ENCODE measurements at regions of chr9 and their contacts with region 1.

Region 1: GRCh38 chr9:128067876-128068613 is at the start of gene SLC25A25:
- DNase-seq: peak; percentile 100
- ATAC-seq: peak; percentile 89
- H3K4me3 Mint-ChIP-seq: peak within 1 kb of the TSS; percentile 96
- H3K27ac Mint-ChIP-seq: peak within 1 kb of the TSS; percentile 87
- H3K4me1 Mint-ChIP-seq: peaks cover 50% of the 10 kb centered on the region
- H3K27me3 Mint-ChIP-seq: no peaks in the 10 kb centered on the region
- CTCF ChIP-seq: no peak
- total RNA-seq, gene SLC25A25: 12.9 to 14.6 TPM

Region 2: GRCh38 chr9:128094166-128094967 is 26.3 kb after region 1 on chr9:
- CTCF ChIA-PET with region 1: interaction called, 6 read pairs
- POLR2A ChIA-PET with region 1: interaction called, 10 read pairs
- intact Hi-C with region 1: no loop called
- DNase-seq: peak; percentile 92
- ATAC-seq: peak; percentile 87
- H3K4me3 Mint-ChIP-seq: peak overlapping the region; percentile 55
- H3K27ac Mint-ChIP-seq: peak overlapping the region; percentile 94
- H3K4me1 Mint-ChIP-seq: peaks cover 81% of the 10 kb centered on the region
- H3K27me3 Mint-ChIP-seq: no peaks in the 10 kb centered on the region
- CTCF ChIP-seq: no peak